H1 (cell line): ENCODE measurements at regions of chr16 and their contacts with region 1.

Region 1: GRCh38 chr16:56931892-56932720 is at the start of gene HERPUD1:
- DNase-seq: peak; percentile 91 to 97
- H3K4me3 ChIP-seq: peak within 1 kb of the TSS; percentile 69 to 95 (median 84)
- H3K27ac ChIP-seq: peak within 1 kb of the TSS; percentile 81
- H3K4me1 ChIP-seq: peaks cover 5 to 17% (median 11%) of the 10 kb centered on the region in 4 experiments
- H3K27me3 ChIP-seq: no peaks in the 10 kb centered on the region
- CTCF ChIP-seq: peak in 1 of 3 experiments; percentile 0; a peak in 1 of 4 replicates
- EP300 ChIP-seq: peak in 1 of 2 experiments; percentile 45; a peak in 1 of 3 replicates
- POLR2A ChIP-seq: peak; percentile 94 to 99
- RAD21 ChIP-seq: no peak; a peak in 1 of 4 replicates
- total RNA-seq, gene HERPUD1: 34.7 and 35.6 TPM in 2 replicates

Region 2: GRCh38 chr16:56851671-56852400 is 80.3 kb before region 1 on chr16:
- CTCF ChIA-PET with region 1: interaction called, 4 read pairs
- POLR2A ChIA-PET with region 1: interaction called, 14 read pairs
- DNase-seq: peak in 1 of 2 experiments; percentile 29
- H3K4me3 ChIP-seq: no peak overlapping the region
- H3K27ac ChIP-seq: no peak overlapping the region
- H3K4me1 ChIP-seq: peaks cover 2 to 11% (median 7%) of the 10 kb centered on the region in 4 experiments; a peak in 5 of 7 replicates
- H3K27me3 ChIP-seq: no peaks in the 10 kb centered on the region
- CTCF ChIP-seq: peak in 2 of 3 experiments; percentile 48 to 69; a peak in 3 of 4 replicates
- EP300 ChIP-seq: no peak
- POLR2A ChIP-seq: no peak
- RAD21 ChIP-seq: peak; percentile 45

Region 3: GRCh38 chr16:56888806-56889205 is 43.3 kb before region 1 on chr16:
- CTCF ChIA-PET with region 1: interaction called, 4 read pairs
- POLR2A ChIA-PET with region 1: interaction called, 18 read pairs
- DNase-seq: no peak
- H3K4me3 ChIP-seq: no peak overlapping the region
- H3K27ac ChIP-seq: no peak overlapping the region
- H3K4me1 ChIP-seq: no peaks in the 10 kb centered on the region
- H3K27me3 ChIP-seq: no peaks in the 10 kb centered on the region
- CTCF ChIP-seq: no peak
- EP300 ChIP-seq: no peak
- POLR2A ChIP-seq: no peak
- RAD21 ChIP-seq: no peak

Region 4: GRCh38 chr16:56911771-56912571 is 20.1 kb before region 1 on chr16:
- CTCF ChIA-PET with region 1: interaction called, 6 read pairs
- POLR2A ChIA-PET with region 1: interaction called, 82 read pairs
- DNase-seq: no peak
- H3K4me3 ChIP-seq: no peak overlapping the region
- H3K27ac ChIP-seq: no peak overlapping the region
- H3K4me1 ChIP-seq: peaks cover 0 to 14% (median under 1%) of the 10 kb centered on the region in 4 experiments; a peak in 3 of 7 replicates
- H3K27me3 ChIP-seq: no peaks in the 10 kb centered on the region; a peak in 1 of 7 replicates
- CTCF ChIP-seq: no peak
- EP300 ChIP-seq: no peak
- POLR2A ChIP-seq: no peak
- RAD21 ChIP-seq: no peak

Region 5: DNA sequence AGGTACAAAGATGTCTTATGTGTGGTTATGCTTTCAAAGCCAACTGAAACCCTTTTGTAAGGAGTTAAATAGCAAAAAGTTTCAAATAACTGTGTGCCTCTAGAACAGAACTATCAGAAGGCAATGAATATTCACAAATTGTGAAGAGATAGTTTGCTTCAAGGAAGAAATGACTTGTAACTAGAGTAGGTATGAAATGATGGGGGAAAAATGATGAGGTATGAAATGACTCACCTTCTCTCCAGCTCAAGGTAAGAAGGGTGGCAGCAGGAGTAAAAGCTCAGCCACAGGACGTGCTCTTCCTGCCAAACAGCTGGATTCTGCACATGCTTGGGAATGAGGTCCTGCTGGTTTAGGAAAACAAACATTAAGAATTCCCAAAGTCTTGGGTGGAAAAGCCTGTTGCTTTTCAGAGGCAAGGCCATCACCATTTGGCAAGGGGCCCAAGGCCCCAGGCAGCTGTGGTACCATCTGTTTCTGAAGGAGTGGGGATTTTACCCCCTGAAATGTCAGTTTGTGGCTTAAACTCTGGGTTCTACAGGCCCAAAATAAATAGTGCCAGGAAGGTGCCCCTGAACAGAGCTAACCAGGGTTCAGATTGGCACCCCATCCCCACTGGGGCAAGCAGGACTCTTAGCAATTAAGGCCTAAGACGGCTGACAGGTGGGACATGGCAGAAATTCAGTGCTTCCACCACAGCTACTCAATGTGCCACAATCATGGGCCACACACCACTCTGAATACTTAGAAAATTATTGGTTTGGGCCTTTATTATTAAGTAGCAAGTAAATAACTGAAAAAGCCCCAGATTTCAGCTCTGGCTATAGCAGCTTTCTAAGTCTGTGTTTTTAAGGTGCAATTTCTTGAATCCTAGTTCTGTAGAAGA is 13.1 kb after region 1 on chr16:
- CTCF ChIA-PET with region 1: no interaction called
- POLR2A ChIA-PET with region 1: interaction called, 125 read pairs
- DNase-seq: no peak
- H3K4me3 ChIP-seq: no peak overlapping the region
- H3K27ac ChIP-seq: no peak overlapping the region
- H3K4me1 ChIP-seq: no peaks in the 10 kb centered on the region
- H3K27me3 ChIP-seq: no peaks in the 10 kb centered on the region
- CTCF ChIP-seq: no peak
- EP300 ChIP-seq: no peak
- POLR2A ChIP-seq: no peak
- RAD21 ChIP-seq: no peak